Cardiac septum (tissue), 1 donor: ENCODE measurements at regions of chr10 and their contacts with region 1.

Region 1: DNA sequence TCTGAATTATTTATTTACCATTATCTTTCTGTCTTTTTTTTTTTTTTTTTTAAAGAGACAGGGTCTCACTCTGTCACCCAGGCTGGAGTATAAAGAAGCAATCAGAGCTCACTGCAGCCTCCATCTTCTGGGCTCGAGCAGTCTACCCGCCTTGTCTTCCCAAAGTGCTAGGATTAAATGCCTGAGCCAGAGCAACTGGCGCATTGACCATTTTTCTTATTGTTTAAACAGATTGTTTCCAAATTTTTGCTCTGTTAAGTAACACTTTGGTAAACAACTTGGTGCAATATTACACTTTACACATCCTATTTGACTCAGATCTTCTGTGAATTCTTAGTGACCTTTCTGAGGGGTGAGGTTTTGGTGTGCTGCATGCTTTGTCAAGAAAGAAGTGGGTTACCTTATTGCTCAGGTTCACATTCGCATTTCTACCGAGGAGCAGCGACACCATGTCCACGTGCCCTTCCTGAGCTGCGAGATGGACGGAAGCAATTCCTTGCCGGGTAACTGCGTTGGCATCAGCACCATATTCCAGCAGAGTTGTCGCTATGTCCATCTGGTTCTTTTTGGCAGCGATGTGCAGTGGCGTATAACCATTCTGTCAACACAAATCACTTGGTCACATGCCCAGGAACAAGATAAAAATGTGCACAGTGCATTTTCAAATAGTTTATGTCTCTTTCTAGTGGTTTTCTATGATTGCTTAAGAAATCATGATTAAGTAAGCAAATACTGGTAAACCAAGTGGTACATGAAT is 203.2 kb downstream of the ANK3 start:
- DNase-seq: no peak

Region 2: DNA sequence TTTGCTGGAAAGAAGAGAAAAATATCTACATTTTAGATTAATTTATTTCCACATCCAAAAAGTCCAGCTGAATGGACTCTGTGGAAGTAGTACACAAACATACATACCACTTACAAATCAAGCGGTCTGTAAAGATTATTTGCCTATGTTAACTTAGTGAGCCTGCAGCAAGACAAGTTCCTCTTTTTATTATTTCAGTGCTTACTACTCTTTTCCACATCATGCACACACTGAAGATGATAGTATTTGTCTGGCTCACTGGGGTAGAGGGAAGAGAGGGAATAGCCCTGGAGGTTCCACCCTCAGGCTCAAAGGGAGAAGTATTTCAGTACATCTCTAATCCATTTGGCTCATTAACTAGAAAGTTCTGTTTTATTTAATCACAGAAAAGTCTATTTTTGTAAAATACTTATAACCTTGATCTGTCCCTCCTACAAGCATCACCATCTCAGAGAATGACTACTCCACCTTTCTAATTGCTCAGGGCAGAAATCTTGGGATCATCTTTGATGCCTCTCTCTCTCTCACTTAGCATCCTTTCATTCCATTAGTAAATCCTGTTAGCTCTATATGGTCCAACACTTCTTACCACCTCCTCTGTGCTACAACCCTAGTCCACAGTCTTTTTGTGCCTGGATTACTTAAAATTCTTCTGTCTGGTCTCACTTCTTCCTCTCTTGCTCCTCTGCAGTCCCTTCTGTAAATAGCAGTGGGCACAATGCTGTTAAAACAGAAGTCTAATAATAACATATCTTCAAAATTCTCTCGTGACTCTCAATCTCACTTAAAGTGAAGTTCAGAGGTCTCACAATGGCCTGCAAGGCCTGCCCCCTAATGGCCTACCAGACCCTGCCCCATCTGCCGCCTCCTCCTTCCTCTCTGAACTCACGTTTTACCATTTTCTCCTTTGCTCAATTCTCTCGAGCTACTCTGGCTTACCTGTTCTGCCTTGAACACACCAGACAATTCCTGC is 215.8 kb before region 1 on chr10:
- intact Hi-C with region 1: no loop called
- DNase-seq: no peak

Region 3: GRCh38 chr10:60140651-60141632 is 45.6 kb before region 1 on chr10:
- intact Hi-C with region 1: loop called (anchors 5 kb)
- DNase-seq: no peak